Activated B cell treated with CpG ODN at 0.5 μM for 24 hours (primary cell): ENCODE measurements at regions of chr19 and their contacts with region 1.

Region 1: GRCh38 chr19:32971715-32972540 is at the starts of genes CEP89 and FAAP24:
- DNase-seq: peak; percentile 94
- ATAC-seq: peak; percentile 98
- H3K4me3 Mint-ChIP-seq: peak within 1 kb of the TSS; percentile 99
- H3K27ac Mint-ChIP-seq: peak within 1 kb of the TSS; percentile 97
- H3K4me1 Mint-ChIP-seq: peaks cover 15% of the 10 kb centered on the region
- H3K27me3 Mint-ChIP-seq: no peaks in the 10 kb centered on the region
- CTCF ChIP-seq: no peak
- total RNA-seq, gene CEP89: 16.4 and 19.4 TPM in 2 replicates
- total RNA-seq, gene FAAP24: 3.7 and 4.3 TPM in 2 replicates

Region 2: GRCh38 chr19:32345261-32346207 is 626.4 kb before region 1 on chr19 and contains the start of gene ZNF507:
- CTCF ChIA-PET with region 1: no interaction called
- POLR2A ChIA-PET with region 1: no interaction called
- intact Hi-C with region 1: loop called (anchors 5 kb)
- DNase-seq: peak; percentile 84
- ATAC-seq: peak; percentile 86
- H3K4me3 Mint-ChIP-seq: peak within 1 kb of the TSS; percentile 98
- H3K27ac Mint-ChIP-seq: peak within 1 kb of the TSS; percentile 92
- H3K4me1 Mint-ChIP-seq: peaks cover 36% of the 10 kb centered on the region
- H3K27me3 Mint-ChIP-seq: no peaks in the 10 kb centered on the region
- CTCF ChIP-seq: no peak
- total RNA-seq, gene ZNF507: 35.3 and 38.6 TPM in 2 replicates

Region 3: GRCh38 chr19:32471095-32471494 is 500.8 kb before region 1 on chr19:
- CTCF ChIA-PET with region 1: no interaction called
- POLR2A ChIA-PET with region 1: no interaction called
- intact Hi-C with region 1: no loop called
- DNase-seq: no peak
- ATAC-seq: no peak
- H3K4me3 Mint-ChIP-seq: no peak overlapping the region
- H3K27ac Mint-ChIP-seq: no peak overlapping the region
- H3K4me1 Mint-ChIP-seq: no peaks in the 10 kb centered on the region
- H3K27me3 Mint-ChIP-seq: no peaks in the 10 kb centered on the region
- CTCF ChIP-seq: no peak

Region 4: DNA sequence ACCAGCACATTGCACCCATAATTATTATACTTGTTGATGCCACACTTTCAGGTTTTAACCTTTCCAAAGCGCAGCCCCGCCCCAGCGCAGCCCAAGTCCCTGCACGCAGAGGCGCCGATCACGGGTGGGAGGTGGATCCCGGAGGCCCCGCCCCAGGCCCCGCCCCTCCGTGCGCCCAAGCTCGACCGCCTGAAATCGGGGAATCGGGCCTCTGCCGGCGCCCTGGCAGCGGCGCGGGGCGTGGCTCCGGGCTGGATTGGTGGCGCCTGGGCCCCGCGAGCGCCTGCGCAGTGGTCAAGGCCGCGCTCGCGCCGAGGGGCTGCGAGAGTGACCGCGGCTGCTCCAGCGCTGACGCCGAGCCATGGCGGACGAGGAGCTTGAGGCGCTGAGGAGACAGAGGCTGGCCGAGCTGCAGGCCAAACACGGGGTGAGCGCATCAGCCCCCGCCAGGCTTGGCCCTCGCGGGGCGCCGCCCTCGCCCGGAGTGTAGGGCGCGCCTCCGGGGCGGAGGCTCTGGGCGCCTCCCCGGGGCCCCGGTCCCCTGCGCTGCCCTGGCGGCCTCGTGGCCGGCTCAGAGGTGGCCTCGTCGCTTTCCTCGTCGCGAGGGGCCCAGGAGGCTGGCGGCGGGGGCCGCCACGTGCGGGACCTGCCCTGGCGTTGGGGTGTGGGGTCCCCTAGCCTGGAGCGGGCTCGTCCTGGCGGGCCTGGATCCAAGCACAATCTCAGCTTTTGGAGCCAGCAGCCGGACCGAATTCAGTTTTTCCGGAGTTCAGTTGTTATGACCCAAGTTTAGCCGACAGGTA is 390.8 kb before region 1 on chr19 and contains the start of gene PDCD5:
- CTCF ChIA-PET with region 1: no interaction called
- POLR2A ChIA-PET with region 1: no interaction called
- intact Hi-C with region 1: loop called (anchors 1 kb)
- DNase-seq: peak; percentile 91
- ATAC-seq: peak; percentile 95
- H3K4me3 Mint-ChIP-seq: peak within 1 kb of the TSS; percentile 91
- H3K27ac Mint-ChIP-seq: peak within 1 kb of the TSS; percentile 85
- H3K4me1 Mint-ChIP-seq: peaks cover 16% of the 10 kb centered on the region
- H3K27me3 Mint-ChIP-seq: no peaks in the 10 kb centered on the region
- CTCF ChIP-seq: no peak
- total RNA-seq, gene PDCD5: 58.2 and 64.9 TPM in 2 replicates

Region 5: DNA sequence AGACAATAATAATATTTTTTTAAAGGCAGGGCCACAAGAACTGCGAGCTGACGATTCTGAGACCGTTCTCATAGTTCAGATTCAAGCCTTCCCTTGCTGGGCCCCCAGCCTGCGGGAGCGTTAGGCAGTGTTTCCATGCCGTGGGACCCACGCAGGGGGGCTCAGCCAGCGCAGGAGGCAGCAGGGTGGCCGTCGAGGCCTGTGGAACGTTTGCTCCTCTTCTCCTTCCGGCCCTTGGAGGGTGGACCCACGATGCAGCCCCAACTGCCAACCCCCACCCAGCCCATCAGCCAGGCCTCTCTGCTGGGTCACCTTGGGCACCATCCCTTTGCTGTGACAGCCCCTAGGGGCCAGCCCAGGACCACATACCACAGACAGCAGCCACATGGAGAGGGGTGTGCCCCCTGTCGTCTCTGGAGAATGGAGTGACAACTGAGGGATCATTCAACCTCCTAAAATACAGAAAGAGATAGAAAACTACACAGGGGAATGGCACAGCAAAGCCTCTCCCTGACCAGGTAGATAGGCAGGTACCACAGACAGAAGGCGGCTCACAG is 344.1 kb before region 1 on chr19:
- CTCF ChIA-PET with region 1: no interaction called
- POLR2A ChIA-PET with region 1: no interaction called
- intact Hi-C with region 1: no loop called
- DNase-seq: no peak
- ATAC-seq: no peak
- H3K4me3 Mint-ChIP-seq: no peak overlapping the region
- H3K27ac Mint-ChIP-seq: no peak overlapping the region
- H3K4me1 Mint-ChIP-seq: no peaks in the 10 kb centered on the region
- H3K27me3 Mint-ChIP-seq: no peaks in the 10 kb centered on the region
- CTCF ChIP-seq: no peak

Region 6: GRCh38 chr19:32691291-32691951 is 280.5 kb before region 1 on chr19 and contains the start of gene NUDT19:
- CTCF ChIA-PET with region 1: no interaction called
- POLR2A ChIA-PET with region 1: interaction called, 3 read pairs
- intact Hi-C with region 1: loop called (anchors 5 kb)
- DNase-seq: peak; percentile 74
- ATAC-seq: peak; percentile 94
- H3K4me3 Mint-ChIP-seq: peak within 1 kb of the TSS; percentile 85
- H3K27ac Mint-ChIP-seq: peak within 1 kb of the TSS; percentile 70
- H3K4me1 Mint-ChIP-seq: peaks cover 41% of the 10 kb centered on the region
- H3K27me3 Mint-ChIP-seq: no peaks in the 10 kb centered on the region
- CTCF ChIP-seq: no peak
- total RNA-seq, gene NUDT19: 8.5 and 9.0 TPM in 2 replicates

Region 7: GRCh38 chr19:32798201-32798600 is 173.7 kb before region 1 on chr19:
- CTCF ChIA-PET with region 1: no interaction called
- POLR2A ChIA-PET with region 1: no interaction called
- intact Hi-C with region 1: no loop called
- DNase-seq: no peak
- ATAC-seq: no peak
- H3K4me3 Mint-ChIP-seq: no peak overlapping the region
- H3K27ac Mint-ChIP-seq: no peak overlapping the region
- H3K4me1 Mint-ChIP-seq: no peaks in the 10 kb centered on the region
- H3K27me3 Mint-ChIP-seq: peaks cover 9% of the 10 kb centered on the region
- CTCF ChIP-seq: no peak

Region 8: DNA sequence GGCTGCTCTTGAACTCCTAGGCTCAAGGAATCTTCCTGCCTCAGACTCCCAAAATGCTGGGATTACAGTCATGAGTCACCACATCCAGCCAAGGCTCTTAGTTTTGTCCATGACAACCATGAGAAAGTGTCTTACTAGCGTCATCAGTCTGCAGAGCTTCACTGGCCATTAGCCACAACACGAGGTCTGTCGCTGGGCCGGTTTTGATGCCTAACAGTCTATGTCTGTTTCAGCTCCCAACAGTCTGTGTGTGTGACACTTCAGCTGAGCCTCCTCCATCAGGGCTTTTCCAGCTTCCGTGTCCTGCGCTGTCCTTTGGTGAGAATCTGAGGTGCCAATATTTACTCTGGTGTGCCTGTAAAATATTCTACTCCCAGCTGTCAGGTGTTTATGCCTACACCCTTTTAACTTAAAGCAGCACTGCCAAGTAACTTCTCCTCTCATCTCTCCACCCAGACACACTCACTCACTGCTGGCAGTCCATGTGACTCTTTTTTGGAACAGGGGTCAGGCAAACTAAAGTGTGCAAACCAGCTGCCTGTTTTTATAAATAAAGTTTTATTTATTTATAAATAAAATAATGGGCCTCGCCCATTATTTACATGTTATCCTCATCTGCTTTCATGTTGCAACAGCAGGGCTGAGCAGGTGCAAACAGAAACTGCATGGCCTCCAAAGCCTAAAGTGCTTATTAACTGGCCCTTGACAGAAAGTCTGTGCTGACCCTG is 47.6 kb before region 1 on chr19:
- CTCF ChIA-PET with region 1: no interaction called
- POLR2A ChIA-PET with region 1: no interaction called
- intact Hi-C with region 1: no loop called
- DNase-seq: no peak
- ATAC-seq: no peak
- H3K4me3 Mint-ChIP-seq: no peak overlapping the region
- H3K27ac Mint-ChIP-seq: no peak overlapping the region
- H3K4me1 Mint-ChIP-seq: no peaks in the 10 kb centered on the region
- H3K27me3 Mint-ChIP-seq: no peaks in the 10 kb centered on the region
- CTCF ChIP-seq: no peak

Region 9: GRCh38 chr19:33080761-33081681 is 109.1 kb after region 1 on chr19 and contains the start of gene GPATCH1:
- CTCF ChIA-PET with region 1: no interaction called
- POLR2A ChIA-PET with region 1: interaction called, 3 read pairs
- intact Hi-C with region 1: loop called (anchors 1 kb)
- DNase-seq: peak; percentile 83
- ATAC-seq: peak; percentile 98
- H3K4me3 Mint-ChIP-seq: peak within 1 kb of the TSS; percentile 99
- H3K27ac Mint-ChIP-seq: peak within 1 kb of the TSS; percentile 93
- H3K4me1 Mint-ChIP-seq: peaks cover 23% of the 10 kb centered on the region
- H3K27me3 Mint-ChIP-seq: no peaks in the 10 kb centered on the region
- CTCF ChIP-seq: no peak
- total RNA-seq, gene GPATCH1: 12.8 and 13.0 TPM in 2 replicates

Region 10: DNA sequence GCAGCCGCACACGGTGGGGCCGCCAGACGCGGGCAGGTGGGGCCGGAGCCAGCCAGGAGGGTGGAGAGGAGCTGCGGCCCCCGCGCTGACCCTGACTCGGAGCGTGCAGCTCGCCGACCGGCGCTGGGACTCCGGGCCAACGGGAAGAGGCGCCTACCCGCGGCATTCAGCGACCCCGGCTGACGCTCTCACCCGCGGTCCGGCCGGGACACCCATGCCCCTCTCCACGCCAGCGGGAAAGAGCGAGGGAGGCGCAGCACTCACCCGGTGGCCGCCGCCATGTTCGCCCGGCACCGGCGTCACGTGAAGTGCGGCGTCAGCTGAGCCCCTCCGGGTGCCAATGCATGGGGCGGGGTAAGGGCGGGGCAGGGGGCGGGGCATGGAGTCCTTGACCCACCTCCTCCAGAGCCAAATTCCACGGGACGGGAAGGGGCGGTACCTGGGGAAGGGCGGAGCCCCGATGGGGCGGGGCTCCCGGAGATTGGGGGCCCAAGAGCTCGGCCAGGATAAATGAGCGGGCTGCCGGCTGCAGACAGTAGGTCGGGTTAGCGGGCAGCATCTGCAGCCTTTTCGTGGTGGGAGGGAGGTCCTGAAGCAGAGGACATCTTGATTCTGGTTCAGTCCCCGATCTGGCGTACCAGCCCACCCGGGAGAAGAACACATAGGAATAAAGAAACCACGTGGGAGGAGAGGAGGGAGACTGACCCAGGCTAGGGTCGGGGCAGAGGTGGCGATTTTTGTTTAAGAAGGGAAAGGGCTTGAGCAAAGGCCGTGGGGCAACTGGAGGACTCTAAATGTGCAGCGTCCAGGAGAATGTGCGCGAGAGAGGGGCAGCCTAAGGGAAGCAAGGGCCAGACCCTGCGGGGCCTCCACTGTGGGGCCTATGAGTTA is 549.8 kb after region 1 on chr19 and contains the start of gene PEPD:
- CTCF ChIA-PET with region 1: no interaction called
- POLR2A ChIA-PET with region 1: interaction called, 3 read pairs
- intact Hi-C with region 1: loop called (anchors 2 kb)
- DNase-seq: peak; percentile 78
- ATAC-seq: peak; percentile 98
- H3K4me3 Mint-ChIP-seq: peak within 1 kb of the TSS; percentile 91
- H3K27ac Mint-ChIP-seq: peak within 1 kb of the TSS; percentile 66
- H3K4me1 Mint-ChIP-seq: peaks cover 19% of the 10 kb centered on the region
- H3K27me3 Mint-ChIP-seq: peaks cover 3% of the 10 kb centered on the region
- CTCF ChIP-seq: no peak
- total RNA-seq, gene PEPD: 49.1 and 49.4 TPM in 2 replicates